ENCODE measurements at regions of chr13 and their contacts with region 1.

Region 1: DNA sequence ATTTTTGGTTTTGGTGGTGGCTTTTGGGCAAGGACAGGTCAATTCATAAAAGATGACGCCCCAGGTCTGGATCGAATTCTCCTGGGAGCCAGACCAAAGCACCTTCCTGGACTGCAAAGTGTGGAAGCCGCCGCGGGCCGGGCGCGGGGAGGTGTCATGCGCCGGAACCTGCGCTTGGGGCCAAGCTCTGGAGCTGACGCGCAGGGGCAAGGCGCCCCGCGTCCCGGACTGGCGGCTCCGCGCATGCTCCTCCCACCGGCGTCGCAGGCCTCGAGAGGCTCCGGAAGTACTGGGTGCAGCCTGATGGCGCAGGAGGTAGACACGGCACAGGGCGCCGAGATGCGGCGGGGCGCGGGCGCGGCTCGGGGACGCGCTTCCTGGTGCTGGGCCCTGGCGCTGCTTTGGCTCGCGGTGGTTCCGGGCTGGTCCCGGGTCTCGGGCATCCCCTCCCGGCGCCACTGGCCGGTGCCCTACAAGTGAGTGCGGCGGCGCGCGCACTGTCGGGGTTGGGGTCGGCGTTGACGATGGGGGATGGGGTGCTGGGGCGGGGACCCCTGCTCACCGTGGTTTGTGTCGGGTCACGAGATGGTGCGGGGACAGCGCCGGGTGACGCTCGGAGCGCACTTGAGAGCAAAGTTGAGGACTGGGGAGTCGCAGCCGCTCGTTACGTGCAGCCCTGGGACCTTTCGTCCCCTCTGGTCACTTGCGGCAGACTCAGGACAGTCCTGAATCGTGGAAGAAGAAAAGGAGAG is at the start of gene CLN5:
- DNase-seq: peak; percentile 96
- ATAC-seq: peak; percentile 97
- H3K4me3 Mint-ChIP-seq: peak within 1 kb of the TSS; percentile 94
- H3K27ac Mint-ChIP-seq: peak within 1 kb of the TSS; percentile 99
- H3K4me1 Mint-ChIP-seq: peaks cover 28% of the 10 kb centered on the region
- H3K27me3 Mint-ChIP-seq: peaks cover 19% of the 10 kb centered on the region
- total RNA-seq, gene CLN5: 10.0 to 10.2 TPM

Region 2: GRCh38 chr13:76980075-76980718 is 11.8 kb before region 1 on chr13:
- CTCF ChIA-PET with region 1: interaction called, 41 read pairs
- POLR2A ChIA-PET with region 1: no interaction called
- DNase-seq: peak; percentile 86
- ATAC-seq: peak; percentile 100
- H3K4me3 Mint-ChIP-seq: peak overlapping the region; percentile 38
- H3K27ac Mint-ChIP-seq: no peak overlapping the region
- H3K4me1 Mint-ChIP-seq: peaks cover 9% of the 10 kb centered on the region
- H3K27me3 Mint-ChIP-seq: peaks cover 34% of the 10 kb centered on the region

Region 3: DNA sequence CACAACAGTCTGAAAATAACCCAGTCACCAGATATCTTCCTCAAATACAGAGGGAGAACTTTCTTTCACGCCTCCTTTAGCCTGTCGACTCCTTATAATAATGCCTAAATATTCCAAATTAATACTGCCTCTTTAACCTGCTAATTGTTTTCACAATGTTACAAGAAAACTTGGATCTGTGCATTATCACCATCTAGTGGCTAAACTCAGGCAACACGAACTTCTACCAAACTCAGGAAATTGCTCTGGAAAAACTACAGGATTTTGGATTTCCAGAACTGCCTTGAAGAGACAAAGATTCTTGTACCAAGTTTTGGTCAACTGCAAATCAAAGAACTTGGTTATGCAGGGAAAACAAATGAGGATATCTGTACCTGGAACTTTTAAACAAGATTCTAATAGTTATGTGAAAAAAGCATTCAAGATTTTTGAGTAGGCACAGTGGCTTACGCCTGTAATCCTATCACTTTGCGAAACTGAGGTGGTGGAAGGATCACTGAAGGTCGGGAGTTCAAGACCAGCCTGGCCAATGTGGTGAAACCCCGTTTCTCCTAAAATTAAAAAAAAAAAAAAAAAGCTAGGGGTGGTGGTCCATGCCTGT is 10.7 kb after region 1 on chr13:
- CTCF ChIA-PET with region 1: interaction called, 10 read pairs
- POLR2A ChIA-PET with region 1: interaction called, 7 read pairs
- DNase-seq: no peak
- ATAC-seq: no peak
- H3K4me3 Mint-ChIP-seq: no peak overlapping the region
- H3K27ac Mint-ChIP-seq: no peak overlapping the region
- H3K4me1 Mint-ChIP-seq: peaks cover 20% of the 10 kb centered on the region
- H3K27me3 Mint-ChIP-seq: no peaks in the 10 kb centered on the region

Region 4: DNA sequence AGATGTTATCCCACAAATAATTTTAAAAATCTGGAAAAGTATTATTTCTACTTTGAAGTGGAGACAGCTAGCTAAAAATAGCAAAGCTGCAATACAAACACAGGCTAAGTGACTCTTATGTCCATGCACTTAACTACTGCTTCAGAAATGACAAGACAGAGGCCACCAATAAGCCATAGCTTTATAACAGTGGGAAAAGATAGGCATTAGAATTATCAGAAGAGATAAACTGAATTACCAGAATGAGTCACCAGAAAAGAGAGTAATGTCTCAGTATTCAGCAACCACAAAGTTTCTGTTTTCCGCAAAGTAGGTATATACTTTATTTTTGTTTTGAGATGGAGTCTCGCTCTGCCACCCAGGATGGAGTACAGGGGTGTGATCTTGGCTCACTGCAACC is 17.0 kb after region 1 on chr13:
- CTCF ChIA-PET with region 1: interaction called, 10 read pairs
- POLR2A ChIA-PET with region 1: interaction called, 16 read pairs
- DNase-seq: no peak
- ATAC-seq: no peak
- H3K4me3 Mint-ChIP-seq: no peak overlapping the region
- H3K27ac Mint-ChIP-seq: no peak overlapping the region
- H3K4me1 Mint-ChIP-seq: peaks cover 21% of the 10 kb centered on the region
- H3K27me3 Mint-ChIP-seq: no peaks in the 10 kb centered on the region

Region 5: GRCh38 chr13:77016888-77017623 is 25.1 kb after region 1 on chr13:
- CTCF ChIA-PET with region 1: interaction called, 10 read pairs
- POLR2A ChIA-PET with region 1: interaction called, 6 read pairs
- DNase-seq: no peak
- ATAC-seq: no peak
- H3K4me3 Mint-ChIP-seq: no peak overlapping the region
- H3K27ac Mint-ChIP-seq: no peak overlapping the region
- H3K4me1 Mint-ChIP-seq: peaks cover 22% of the 10 kb centered on the region
- H3K27me3 Mint-ChIP-seq: no peaks in the 10 kb centered on the region

Region 6: GRCh38 chr13:77026818-77027585 is 35.0 kb after region 1 on chr13 and contains the start of gene FBXL3:
- CTCF ChIA-PET with region 1: interaction called, 23 read pairs
- POLR2A ChIA-PET with region 1: interaction called, 80 read pairs
- DNase-seq: peak; percentile 86
- ATAC-seq: peak; percentile 80
- H3K4me3 Mint-ChIP-seq: peak within 1 kb of the TSS; percentile 94
- H3K27ac Mint-ChIP-seq: peak within 1 kb of the TSS; percentile 98
- H3K4me1 Mint-ChIP-seq: peaks cover 54% of the 10 kb centered on the region
- H3K27me3 Mint-ChIP-seq: no peaks in the 10 kb centered on the region
- total RNA-seq, gene FBXL3: 35.6 to 38.0 TPM

Region 7: GRCh38 chr13:77329133-77329910 is 337.4 kb after region 1 on chr13:
- CTCF ChIA-PET with region 1: interaction called, 3 read pairs
- POLR2A ChIA-PET with region 1: interaction called, 11 read pairs
- DNase-seq: peak; percentile 97
- ATAC-seq: peak; percentile 75
- H3K4me3 Mint-ChIP-seq: peak overlapping the region; percentile 98
- H3K27ac Mint-ChIP-seq: peak overlapping the region; percentile 97
- H3K4me1 Mint-ChIP-seq: peaks cover 37% of the 10 kb centered on the region
- H3K27me3 Mint-ChIP-seq: peaks cover 1% of the 10 kb centered on the region